ENCODE measurements at regions of chr10 and their contacts with region 1.

Region 1: GRCh38 chr10:122461367-122461728 is at the start of gene HTRA1:
- DNase-seq: peak; percentile 77 to 98 (median 84)

Region 2: DNA sequence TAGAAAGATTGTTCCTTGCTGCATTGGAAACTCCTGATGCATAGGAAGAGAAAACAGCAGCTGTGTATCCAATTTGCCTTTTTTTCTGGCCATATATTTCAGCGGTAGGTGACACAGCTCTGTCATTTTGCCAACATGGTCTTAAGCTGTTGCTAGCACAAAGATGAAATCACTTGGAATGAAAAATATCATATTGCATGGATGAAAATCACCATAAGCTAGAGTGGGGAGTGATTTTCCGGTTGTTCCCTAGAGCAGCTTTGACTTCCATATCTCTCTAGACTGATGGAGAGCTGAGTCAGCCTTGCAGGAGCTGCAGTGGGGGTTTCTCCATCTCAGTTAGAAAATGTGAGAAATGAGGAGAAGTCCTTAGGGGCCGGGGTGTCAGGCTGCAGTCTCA is 228.6 kb before region 1 on chr10:
- intact Hi-C with region 1: no loop called
- DNase-seq: peak in 1 of 10 donors; percentile 78

Region 3: GRCh38 chr10:122374237-122374869 is 87.0 kb before region 1 on chr10 and contains the start of gene PLEKHA1:
- intact Hi-C with region 1: loop called (anchors 10 kb)
- DNase-seq: peak; percentile 91 to 99 (median 94)

Region 4: GRCh38 chr10:122495406-122496340 is 34.3 kb after region 1 on chr10:
- intact Hi-C with region 1: loop called (anchors 5 kb)
- DNase-seq: peak in 2 of 10 donors; percentile 64 to 67

Region 5: GRCh38 chr10:122798751-122799150 is 337.4 kb after region 1 on chr10:
- intact Hi-C with region 1: no loop called
- DNase-seq: no peak

Region 6: GRCh38 chr10:123187781-123188180 is 726.4 kb after region 1 on chr10:
- intact Hi-C with region 1: no loop called
- DNase-seq: no peak

Region 7: GRCh38 chr10:123678376-123678775 is 1217.0 kb after region 1 on chr10:
- intact Hi-C with region 1: no loop called
- DNase-seq: no peak

Measured in posterior cingulate gyrus (tissue), 11 donors.